GM23248 (cell line): ENCODE measurements at regions of chr9 and their contacts with region 1.

Region 1: DNA sequence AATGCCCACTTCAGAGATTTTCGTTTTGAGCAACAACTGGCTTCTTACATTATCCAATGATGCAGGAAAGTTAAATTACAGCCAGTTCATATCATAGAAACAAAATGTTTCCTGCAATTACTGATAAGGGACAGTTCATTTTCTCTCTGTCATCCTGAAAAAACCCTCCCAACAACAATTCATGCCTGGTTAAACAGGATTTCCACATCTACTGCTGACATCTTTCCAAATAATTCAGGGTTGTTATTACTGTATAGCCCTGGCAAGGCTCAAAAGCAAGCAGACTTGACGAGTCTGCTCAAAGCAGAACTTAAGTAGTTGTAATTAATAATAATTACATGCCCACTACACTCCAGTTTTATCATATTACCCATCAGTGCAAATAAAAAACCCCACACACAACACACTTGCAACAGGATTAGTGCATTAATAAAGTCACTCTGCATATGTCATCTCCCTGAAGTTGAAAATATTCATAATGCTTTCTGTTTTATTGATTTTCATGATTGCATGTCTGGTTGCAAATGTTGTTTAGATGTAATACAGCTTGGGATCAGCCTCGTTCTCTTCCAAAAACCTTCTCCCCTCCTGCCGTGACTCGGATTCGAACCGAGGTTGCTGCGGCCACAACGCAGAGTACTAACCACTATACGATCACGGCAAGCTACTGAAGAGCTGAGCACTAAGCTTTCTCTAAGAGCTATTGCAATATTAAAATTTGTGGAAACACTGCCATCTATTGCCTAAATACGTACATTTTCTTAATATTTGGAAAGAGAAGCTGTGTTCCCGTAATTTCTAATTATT is 119.6 kb upstream of the NFIB start:
- DNase-seq: peak; percentile 72
- H3K4me3 ChIP-seq: peak overlapping the region; percentile 8; the same call in 1 of the 2 replicates
- H3K27ac ChIP-seq: no peak overlapping the region
- H3K4me1 ChIP-seq: peaks cover 5% of the 10 kb centered on the region
- H3K27me3 ChIP-seq: peaks cover 75% of the 10 kb centered on the region

Region 2: DNA sequence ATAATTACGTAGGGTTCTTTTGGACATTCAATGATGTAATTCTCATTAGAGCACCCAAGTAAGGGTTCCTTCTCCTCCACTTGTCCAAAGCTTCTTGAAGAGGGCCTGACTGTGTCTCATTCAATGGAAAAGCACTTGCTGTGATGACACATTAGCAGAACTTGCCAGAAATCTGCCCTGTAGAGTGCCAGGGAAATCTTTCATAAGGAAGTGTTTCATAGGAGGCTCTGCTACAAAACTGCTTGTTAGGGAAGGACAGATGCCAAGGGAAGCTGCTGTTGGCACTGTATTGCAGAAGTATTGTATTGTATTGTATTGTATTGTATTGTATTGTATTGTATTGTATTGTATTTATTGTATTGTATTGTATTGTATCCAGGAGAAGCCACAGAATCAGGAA is 1108.6 kb before region 1 on chr9:
- in situ Hi-C with region 1: no loop called
- DNase-seq: peak; percentile 60
- H3K4me3 ChIP-seq: no peak overlapping the region
- H3K27ac ChIP-seq: no peak overlapping the region
- H3K4me1 ChIP-seq: no peaks in the 10 kb centered on the region
- H3K27me3 ChIP-seq: no peaks in the 10 kb centered on the region

Region 3: DNA sequence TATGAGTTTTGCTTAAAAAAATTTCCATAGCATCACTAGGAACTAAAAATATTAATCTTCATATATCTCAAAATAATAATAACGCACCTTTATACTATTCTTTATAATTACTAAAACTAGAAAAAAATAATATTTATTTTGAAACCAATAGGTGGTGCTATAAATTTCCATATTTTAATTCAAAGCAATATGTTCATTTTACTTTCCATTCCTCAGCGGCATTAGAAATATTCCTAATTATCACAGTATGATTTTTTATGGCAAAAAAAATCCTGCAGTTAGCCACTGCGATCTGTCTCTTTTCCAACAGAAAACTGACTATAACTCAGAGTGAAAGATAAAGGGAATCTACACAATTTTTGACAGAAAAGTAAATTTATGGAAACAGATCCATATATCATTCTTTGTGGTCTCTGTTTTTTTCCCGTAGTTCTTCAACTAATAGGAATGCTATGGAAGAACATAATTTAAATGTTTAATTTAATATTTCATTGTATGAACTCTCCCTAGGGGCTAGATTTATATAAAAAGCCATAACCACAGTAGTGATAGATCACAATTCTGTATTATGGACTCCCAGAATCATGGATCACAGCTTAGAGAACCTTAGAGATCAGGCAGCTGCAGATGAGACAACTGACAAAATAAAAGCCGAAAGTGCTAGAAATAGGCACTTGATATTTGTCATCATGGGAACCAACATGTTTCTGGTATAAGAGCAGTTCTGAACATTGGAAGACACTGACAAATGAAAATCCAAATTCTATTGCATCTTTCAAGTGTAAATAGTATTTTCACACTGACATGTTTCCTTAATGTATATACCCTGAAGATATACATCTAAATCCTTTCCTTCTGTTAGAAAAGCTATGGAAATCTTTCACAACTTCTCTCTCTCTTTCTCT is 986.4 kb before region 1 on chr9:
- in situ Hi-C with region 1: loop called (anchors 10 kb)
- DNase-seq: peak; percentile 21
- H3K4me3 ChIP-seq: no peak overlapping the region
- H3K27ac ChIP-seq: no peak overlapping the region
- H3K4me1 ChIP-seq: no peaks in the 10 kb centered on the region
- H3K27me3 ChIP-seq: peaks cover 81% of the 10 kb centered on the region

Region 4: DNA sequence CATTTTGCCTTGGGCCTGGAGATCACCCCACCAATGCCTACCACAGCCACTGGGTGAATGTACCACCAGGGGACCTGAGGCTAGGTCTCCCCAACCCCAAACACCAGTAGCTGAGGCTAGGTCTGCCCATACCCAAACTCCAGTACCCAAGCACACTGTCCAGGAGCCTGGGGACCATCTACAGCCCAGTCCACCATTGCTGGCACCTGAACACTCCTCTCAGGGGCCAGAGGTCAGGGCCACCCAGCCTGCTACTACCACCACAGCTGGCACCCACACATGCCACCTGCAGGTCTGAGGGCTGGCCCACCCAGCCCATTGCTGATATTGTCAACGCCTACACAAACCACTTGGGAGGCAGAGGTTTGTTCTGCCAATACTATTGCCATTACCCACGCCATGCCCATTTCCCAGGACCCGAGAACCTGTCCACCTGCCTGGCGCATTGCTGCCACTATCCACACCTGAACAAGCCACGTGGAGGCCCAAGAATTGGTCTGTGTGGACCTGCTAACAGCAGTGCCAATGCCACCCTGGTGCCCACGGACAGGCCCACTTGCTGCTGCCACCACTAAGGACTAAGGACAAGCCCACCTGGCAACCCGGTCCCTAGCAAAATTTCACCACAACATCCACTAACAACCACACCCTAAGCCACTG is 200.5 kb after region 1 on chr9:
- in situ Hi-C with region 1: no loop called
- DNase-seq: no peak
- H3K4me3 ChIP-seq: no peak overlapping the region
- H3K27ac ChIP-seq: no peak overlapping the region
- H3K4me1 ChIP-seq: no peaks in the 10 kb centered on the region
- H3K27me3 ChIP-seq: no peaks in the 10 kb centered on the region